Heart right ventricle (tissue), 16 donors: ENCODE measurements at regions of chr9 and their contacts with region 1.

Region 1: DNA sequence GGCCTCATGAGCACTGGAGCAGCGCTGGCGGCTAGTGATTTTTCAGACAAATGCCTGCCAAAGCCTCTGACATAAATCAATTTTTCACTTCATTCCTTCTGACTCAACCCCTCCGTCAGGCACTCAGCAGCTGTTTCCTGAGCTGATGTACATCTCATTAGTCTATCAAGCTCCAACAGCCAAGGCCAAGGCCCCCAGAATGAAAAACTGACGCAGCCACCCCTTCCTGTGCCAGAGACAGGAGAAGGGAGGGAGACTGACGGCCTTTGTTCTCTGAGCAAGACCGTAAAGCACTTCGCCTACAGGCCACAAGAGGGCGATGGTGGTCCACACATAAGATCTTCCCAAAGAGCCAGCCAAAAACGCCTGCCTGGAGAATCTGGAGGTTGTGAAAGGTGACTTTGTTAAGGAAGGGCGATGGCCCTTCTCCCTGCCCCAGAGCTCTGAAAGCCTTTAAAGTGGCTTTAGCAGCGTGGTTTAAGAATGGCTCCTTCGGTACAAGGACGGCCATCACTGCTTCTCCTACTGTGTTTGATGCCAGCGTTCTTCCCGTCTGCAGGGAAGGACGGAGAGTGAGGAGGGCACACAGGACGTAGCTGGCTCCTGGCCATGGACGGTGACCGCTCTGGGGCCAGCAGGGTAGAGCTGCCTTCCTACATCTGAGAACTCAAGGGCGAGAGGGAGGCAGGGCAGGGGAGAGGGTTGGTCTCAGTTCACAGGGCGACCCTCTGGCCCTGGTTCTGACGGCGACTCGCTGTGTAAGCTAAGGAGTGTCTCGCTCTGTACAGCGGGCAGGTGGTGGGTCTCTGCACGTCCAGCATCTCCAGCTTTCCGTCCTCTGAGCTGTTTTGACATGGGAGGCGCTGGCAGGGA is 37.0 kb downstream of the ALG2 start:
- DNase-seq: peak; percentile 81 to 89
- ATAC-seq: peak; percentile 79 to 95 (median 92)
- H3K4me3 ChIP-seq: peak overlapping the region in 8 of 10 donors; percentile 9 to 46 (median 34)
- H3K27ac ChIP-seq: peak overlapping the region in 6 of 10 donors; percentile 0 to 54 (median 43)
- H3K4me1 ChIP-seq: peaks cover 0 to 22% (median 9%) of the 10 kb centered on the region in 9 donors
- H3K27me3 ChIP-seq: no peaks in the 10 kb centered on the region
- CTCF ChIP-seq: peak; percentile 91 to 97 (median 96)

Region 2: GRCh38 chr9:99050292-99050911 is 134.3 kb before region 1 on chr9:
- intact Hi-C with region 1: no loop called
- DNase-seq: no peak
- ATAC-seq: peak in 1 of 8 donors; percentile 5
- H3K4me3 ChIP-seq: no peak overlapping the region
- H3K27ac ChIP-seq: no peak overlapping the region
- H3K4me1 ChIP-seq: peaks cover 0 to 23% (median 0%) of the 10 kb centered on the region in 9 donors
- H3K27me3 ChIP-seq: peaks cover 0 to 33% (median 0%) of the 10 kb centered on the region in 7 donors
- CTCF ChIP-seq: no peak

Region 3: GRCh38 chr9:99130069-99130468 is 54.6 kb before region 1 on chr9:
- intact Hi-C with region 1: no loop called
- DNase-seq: no peak
- ATAC-seq: no peak
- H3K4me3 ChIP-seq: no peak overlapping the region
- H3K27ac ChIP-seq: no peak overlapping the region
- H3K4me1 ChIP-seq: peaks cover 0 to 50% (median 12%) of the 10 kb centered on the region in 9 donors
- H3K27me3 ChIP-seq: no peaks in the 10 kb centered on the region
- CTCF ChIP-seq: no peak

Region 4: GRCh38 chr9:99162759-99163364 is 21.8 kb before region 1 on chr9:
- intact Hi-C with region 1: loop called in 1 of 10 experiments (anchors 1 kb)
- DNase-seq: no peak
- ATAC-seq: no peak
- H3K4me3 ChIP-seq: no peak overlapping the region
- H3K27ac ChIP-seq: no peak overlapping the region
- H3K4me1 ChIP-seq: peaks cover 0 to 5% (median 0%) of the 10 kb centered on the region in 9 donors
- H3K27me3 ChIP-seq: peaks cover 0 to 1% (median 0%) of the 10 kb centered on the region in 7 donors
- CTCF ChIP-seq: peak; percentile 12 to 76 (median 61)

Region 5: GRCh38 chr9:99266255-99267023 is 81.7 kb after region 1 on chr9:
- intact Hi-C with region 1: loop called in 1 of 10 experiments (anchors 10 kb)
- DNase-seq: peak; percentile 68 to 74
- ATAC-seq: peak; percentile 55 to 92 (median 83)
- H3K4me3 ChIP-seq: no peak overlapping the region
- H3K27ac ChIP-seq: no peak overlapping the region
- H3K4me1 ChIP-seq: peaks cover 0 to 12% (median 6%) of the 10 kb centered on the region in 9 donors
- H3K27me3 ChIP-seq: no peaks in the 10 kb centered on the region
- CTCF ChIP-seq: peak; percentile 69 to 91 (median 88)

Region 6: DNA sequence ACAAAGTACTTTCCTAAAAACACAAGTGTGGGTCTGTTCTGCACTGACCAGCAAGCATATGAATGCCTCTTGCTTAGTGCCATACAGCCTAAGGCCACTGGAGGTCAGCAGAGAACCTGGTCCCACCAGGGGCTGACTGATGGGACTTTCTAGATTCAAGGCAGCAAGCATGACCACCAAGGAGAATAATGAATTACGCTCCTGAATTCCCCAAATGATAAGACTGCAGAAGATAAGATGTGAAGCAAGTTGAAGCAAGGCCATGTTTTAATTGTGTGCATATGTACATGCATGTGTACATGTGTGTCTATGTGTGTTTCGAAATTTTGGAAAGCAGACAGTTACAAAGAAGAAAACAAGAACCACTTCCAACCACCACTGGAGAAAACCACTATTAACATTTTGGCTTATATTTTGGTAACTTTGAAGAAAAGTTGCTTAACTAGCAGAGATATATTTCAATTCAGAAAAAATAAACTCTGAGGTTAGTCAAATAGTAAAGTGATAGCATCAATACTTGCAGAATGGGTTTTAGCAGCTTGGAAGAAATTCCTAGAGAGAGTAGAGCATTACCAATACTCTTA is 843.6 kb after region 1 on chr9:
- intact Hi-C with region 1: loop called in 1 of 10 experiments (anchors 10 kb)
- DNase-seq: peak; percentile 50 to 74
- ATAC-seq: peak; percentile 78 to 95 (median 91)
- H3K4me3 ChIP-seq: no peak overlapping the region
- H3K27ac ChIP-seq: no peak overlapping the region
- H3K4me1 ChIP-seq: peaks cover 0 to 18% (median 0%) of the 10 kb centered on the region in 9 donors
- H3K27me3 ChIP-seq: no peaks in the 10 kb centered on the region
- CTCF ChIP-seq: peak; percentile 78 to 98 (median 94)

Region 7: GRCh38 chr9:100322954-100323536 is 1138.3 kb after region 1 on chr9:
- intact Hi-C with region 1: loop called in 8 of 10 experiments (anchors 5 to 10 kb)
- DNase-seq: no peak
- ATAC-seq: peak in 1 of 8 donors; percentile 29
- H3K4me3 ChIP-seq: no peak overlapping the region
- H3K27ac ChIP-seq: no peak overlapping the region
- H3K4me1 ChIP-seq: peaks cover 0 to 5% (median 0%) of the 10 kb centered on the region in 9 donors
- H3K27me3 ChIP-seq: no peaks in the 10 kb centered on the region
- CTCF ChIP-seq: peak; percentile 43 to 74 (median 67)